ENCODE measurements at regions of chr3 and their contacts with region 1.

Region 1: GRCh38 chr3:180802837-180803236 is 109.6 kb upstream of the FXR1 start:
- DNase-seq: no peak
- ATAC-seq: peak in 1 of 2 donors; percentile 77
- H3K4me3 ChIP-seq: no peak overlapping the region
- H3K27ac ChIP-seq: no peak overlapping the region
- H3K4me1 ChIP-seq: peaks cover 10 to 28% of the 10 kb centered on the region in 2 donors
- H3K27me3 ChIP-seq: no peaks in the 10 kb centered on the region
- CTCF ChIP-seq: peak in 3 of 5 experiments; percentile 34 to 64 (median 49)
- POLR2A ChIP-seq: no peak

Region 2: DNA sequence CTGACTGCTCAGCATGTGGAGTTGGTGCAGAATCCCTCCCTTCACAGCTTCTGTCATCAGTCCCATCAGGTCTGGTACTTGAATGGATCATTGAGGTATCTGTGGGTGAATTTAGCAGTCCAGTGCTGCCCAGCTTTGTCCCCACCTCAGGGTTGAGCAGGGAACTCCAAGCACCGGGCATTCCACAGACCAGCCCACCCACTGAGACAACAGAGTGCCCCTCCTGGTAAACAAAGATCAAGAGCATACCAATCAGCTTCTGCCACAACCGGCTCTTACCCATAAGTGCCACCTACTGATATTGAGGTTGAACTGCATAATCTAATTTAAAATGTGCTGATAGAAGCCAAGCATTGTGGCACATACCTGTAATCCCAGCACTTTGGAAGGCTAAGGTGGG is 52.5 kb after region 1 on chr3:
- in situ Hi-C with region 1: no loop called
- intact Hi-C with region 1: loop called (anchors 5 kb)
- DNase-seq: no peak
- ATAC-seq: no peak
- H3K4me3 ChIP-seq: no peak overlapping the region
- H3K27ac ChIP-seq: no peak overlapping the region
- H3K4me1 ChIP-seq: no peaks in the 10 kb centered on the region
- H3K27me3 ChIP-seq: no peaks in the 10 kb centered on the region
- CTCF ChIP-seq: no peak
- POLR2A ChIP-seq: no peak

Region 3: DNA sequence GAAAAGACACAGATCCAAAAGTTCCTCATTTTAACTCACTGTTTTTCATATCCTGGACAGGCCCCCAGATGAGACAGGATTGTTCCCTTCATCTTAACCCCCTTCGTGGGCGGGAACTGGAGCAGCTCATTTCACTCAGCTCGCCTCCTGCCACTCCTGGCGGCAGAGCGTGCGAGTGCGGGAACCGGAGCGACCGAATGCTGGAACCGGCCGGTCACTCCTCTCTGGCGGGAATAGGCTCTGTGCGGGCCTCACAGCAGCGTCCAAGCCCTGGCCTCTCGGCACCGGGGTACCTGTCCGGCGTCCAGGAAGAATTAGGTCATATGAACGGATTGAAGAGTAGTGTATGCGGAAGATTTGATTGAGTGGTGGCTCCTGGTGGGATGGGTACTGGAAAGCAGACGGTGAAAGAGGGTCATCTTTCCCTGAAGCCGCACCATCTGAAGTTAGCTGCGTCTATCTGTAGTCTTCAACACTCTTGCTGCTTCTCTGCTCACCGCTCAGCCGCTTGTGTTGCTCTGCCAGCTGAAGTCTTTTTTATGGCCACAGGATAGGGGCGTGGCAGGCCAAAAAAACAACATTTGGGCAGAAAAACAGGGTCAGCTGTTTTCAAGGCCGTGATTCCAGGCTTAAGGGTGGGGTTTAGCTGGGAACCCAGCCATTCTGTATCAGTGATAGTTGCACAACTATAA is 67.3 kb after region 1 on chr3:
- in situ Hi-C with region 1: no loop called
- intact Hi-C with region 1: loop called (anchors 5 kb)
- DNase-seq: peak; percentile 45 to 62
- ATAC-seq: peak; percentile 35 to 53
- H3K4me3 ChIP-seq: peak overlapping the region; percentile 52 to 62 (median 54)
- H3K27ac ChIP-seq: peak overlapping the region; percentile 85 to 89 (median 86)
- H3K4me1 ChIP-seq: peaks cover 18 to 26% of the 10 kb centered on the region in 2 donors
- H3K27me3 ChIP-seq: no peaks in the 10 kb centered on the region
- CTCF ChIP-seq: peak in 1 of 5 experiments; percentile 25
- POLR2A ChIP-seq: peak; percentile 35 to 53

Region 4: GRCh38 chr3:180912304-180913296 is 109.8 kb after region 1 on chr3 and contains the start of gene FXR1:
- in situ Hi-C with region 1: no loop called
- intact Hi-C with region 1: loop called (anchors 5 kb)
- DNase-seq: peak; percentile 85 to 88
- ATAC-seq: peak; percentile 94 to 96
- H3K4me3 ChIP-seq: peak within 1 kb of the TSS; percentile 64 to 94 (median 80)
- H3K27ac ChIP-seq: peak within 1 kb of the TSS; percentile 87 to 94 (median 90)
- H3K4me1 ChIP-seq: peaks cover 40 to 43% of the 10 kb centered on the region in 2 donors
- H3K27me3 ChIP-seq: no peaks in the 10 kb centered on the region
- CTCF ChIP-seq: peak; percentile 70 to 97 (median 84)
- POLR2A ChIP-seq: peak; percentile 84 to 88
- total RNA-seq, gene FXR1: 547 to 578 (median 571) TPM

Region 5: DNA sequence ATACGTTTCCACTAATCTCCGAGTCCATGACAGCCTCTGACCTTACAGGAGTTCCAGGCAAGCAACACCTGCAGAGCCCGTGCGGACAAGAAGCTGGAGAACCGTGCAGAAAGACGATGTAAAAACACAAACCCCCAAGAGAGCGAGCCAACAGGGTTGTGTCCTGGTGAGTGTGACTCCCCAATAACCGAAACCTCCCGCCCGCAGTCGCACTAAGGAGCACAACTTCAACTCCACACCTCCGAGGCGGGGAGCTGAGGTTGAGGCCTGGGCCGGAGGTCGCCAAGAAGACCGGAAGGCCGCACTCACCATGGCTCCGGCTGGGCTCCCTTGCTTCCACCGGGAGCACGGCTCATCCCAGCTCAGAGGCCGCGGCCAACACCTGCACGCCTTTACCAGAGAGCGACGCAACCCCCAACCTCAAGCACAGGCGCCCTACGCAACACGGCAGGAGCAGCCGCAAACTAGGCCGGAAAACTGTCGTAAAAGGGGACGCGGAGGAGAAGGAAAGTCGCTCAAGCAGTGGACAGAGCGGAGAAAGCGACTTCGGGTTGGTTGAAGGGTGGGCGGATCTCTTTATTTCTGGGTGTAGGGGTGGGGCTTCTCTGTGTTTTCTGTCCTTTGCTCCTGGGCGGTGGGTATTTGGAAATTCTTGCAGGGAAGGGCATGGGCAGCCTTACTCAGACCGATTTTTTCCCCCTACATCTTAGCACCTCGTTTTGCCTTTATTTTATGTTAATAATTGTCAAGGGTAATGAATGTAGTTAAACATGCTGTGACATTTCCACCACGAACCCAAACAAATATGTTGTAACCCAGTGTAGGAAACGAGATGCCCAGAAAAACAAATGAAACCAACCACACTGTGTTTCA is 186.7 kb after region 1 on chr3 and contains the start of gene DNAJC19:
- in situ Hi-C with region 1: no loop called
- intact Hi-C with region 1: loop called (anchors 5 kb)
- DNase-seq: peak; percentile 97
- ATAC-seq: peak; percentile 94 to 98
- H3K4me3 ChIP-seq: peak within 1 kb of the TSS; percentile 74 to 94 (median 84)
- H3K27ac ChIP-seq: peak within 1 kb of the TSS; percentile 91 to 97 (median 92)
- H3K4me1 ChIP-seq: peaks cover 32 to 33% of the 10 kb centered on the region in 2 donors
- H3K27me3 ChIP-seq: no peaks in the 10 kb centered on the region
- CTCF ChIP-seq: no peak
- POLR2A ChIP-seq: peak; percentile 81 to 83
- total RNA-seq, gene DNAJC19: 34.2 to 51.7 (median 38.0) TPM

Region 6: GRCh38 chr3:181075098-181075497 is 272.3 kb after region 1 on chr3:
- in situ Hi-C with region 1: no loop called
- intact Hi-C with region 1: loop called (anchors 10 kb)
- DNase-seq: no peak
- ATAC-seq: no peak
- H3K4me3 ChIP-seq: no peak overlapping the region
- H3K27ac ChIP-seq: no peak overlapping the region
- H3K4me1 ChIP-seq: peaks cover 10 to 11% of the 10 kb centered on the region in 2 donors
- H3K27me3 ChIP-seq: no peaks in the 10 kb centered on the region
- CTCF ChIP-seq: no peak
- POLR2A ChIP-seq: no peak

Region 7: GRCh38 chr3:181176601-181177000 is 373.8 kb after region 1 on chr3:
- in situ Hi-C with region 1: loop called in 3 of 4 experiments (anchors 10 to 25 kb)
- intact Hi-C with region 1: loop called (anchors 1 kb)
- DNase-seq: peak; percentile 13 to 32
- ATAC-seq: no peak
- H3K4me3 ChIP-seq: no peak overlapping the region
- H3K27ac ChIP-seq: no peak overlapping the region
- H3K4me1 ChIP-seq: no peaks in the 10 kb centered on the region
- H3K27me3 ChIP-seq: no peaks in the 10 kb centered on the region
- CTCF ChIP-seq: peak; percentile 15 to 59 (median 42)
- POLR2A ChIP-seq: no peak

Measured in gastrocnemius medialis (tissue), 4 donors.